ENCODE measurements at regions of chr12 and their contacts with region 1.

Region 1: DNA sequence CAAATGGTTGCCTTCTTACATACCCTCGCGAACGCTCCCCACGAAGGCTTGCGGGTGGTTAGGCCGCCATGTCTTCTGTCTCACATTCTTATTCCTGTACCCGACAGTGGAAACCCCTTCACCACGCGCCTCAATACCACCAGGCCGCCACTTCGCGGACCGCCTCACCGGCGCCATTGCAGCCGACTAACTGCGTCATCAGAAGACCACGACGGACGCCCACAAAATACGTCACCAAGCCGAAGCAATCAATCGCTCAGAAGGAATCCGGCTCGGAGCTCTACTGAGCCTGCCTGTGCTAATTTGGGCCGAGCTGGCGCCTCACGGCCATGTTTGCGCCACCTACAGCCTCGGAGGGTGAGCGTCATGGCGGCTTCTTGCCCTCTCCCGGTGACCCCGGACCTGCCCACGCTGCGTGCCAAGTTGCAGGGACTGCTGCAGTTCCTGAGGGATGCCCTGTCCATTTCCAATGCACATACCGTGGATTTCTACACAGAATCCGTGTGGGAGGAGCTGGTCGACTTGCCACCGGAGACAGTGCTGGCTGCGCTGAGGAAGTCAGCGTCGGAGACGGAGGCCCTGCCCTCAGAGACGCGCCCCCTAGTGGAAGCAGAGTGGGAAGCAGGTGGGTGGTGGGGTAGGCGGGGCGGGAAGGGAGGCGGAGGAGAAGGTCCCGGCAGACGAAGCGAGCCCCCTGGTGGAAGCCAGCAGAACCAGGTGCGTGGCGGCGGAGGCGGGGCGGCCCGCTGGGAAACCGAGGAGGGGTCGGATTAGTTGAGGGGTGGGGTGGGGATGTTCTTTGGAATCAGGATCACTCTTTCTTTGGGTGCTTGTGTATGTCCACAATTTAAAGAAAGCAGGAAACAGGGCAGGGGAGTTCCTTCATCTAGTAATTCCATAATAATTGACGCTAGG is at the starts of genes CCDC59 and METTL25:
- DNase-seq: peak; percentile 99
- total RNA-seq, gene CCDC59: 23.5 TPM
- total RNA-seq, gene METTL25: 17.8 TPM

Region 2: GRCh38 chr12:82299319-82300025 is 59.0 kb before region 1 on chr12:
- intact Hi-C with region 1: loop called (anchors 2 kb)
- DNase-seq: no peak